ENCODE measurements at regions of chr3 and their contacts with region 1.

Region 1: GRCh38 chr3:182399978-182400737 is 393.1 kb upstream of the ATP11B start:
- DNase-seq: no peak
- H3K4me3 ChIP-seq: no peak overlapping the region
- H3K27ac ChIP-seq: no peak overlapping the region
- H3K4me1 ChIP-seq: no peaks in the 10 kb centered on the region
- H3K27me3 ChIP-seq: no peaks in the 10 kb centered on the region
- CTCF ChIP-seq: no peak
- POLR2A ChIP-seq: no peak

Region 2: DNA sequence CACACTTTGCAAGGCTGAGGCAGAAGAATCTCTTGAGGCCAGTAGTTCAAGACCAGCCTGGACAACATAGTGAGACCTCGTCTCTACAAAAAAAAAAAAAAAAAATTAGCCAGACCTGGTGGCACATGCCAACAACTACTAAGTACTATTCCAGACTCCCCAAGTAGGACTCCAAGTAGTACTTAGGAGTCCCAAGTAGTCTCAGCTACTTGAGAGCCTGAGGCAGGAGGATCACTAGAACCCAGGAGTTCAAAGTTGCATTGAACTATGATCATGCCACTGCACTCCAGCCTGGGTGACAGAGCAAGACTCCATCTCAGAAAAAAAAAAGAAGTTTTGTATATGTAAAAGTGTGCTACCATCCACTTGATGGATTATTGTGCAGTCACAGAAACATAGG is 201.8 kb before region 1 on chr3:
- intact Hi-C with region 1: no loop called
- DNase-seq: no peak
- H3K4me3 ChIP-seq: no peak overlapping the region
- H3K27ac ChIP-seq: no peak overlapping the region
- H3K4me1 ChIP-seq: no peaks in the 10 kb centered on the region
- H3K27me3 ChIP-seq: no peaks in the 10 kb centered on the region
- CTCF ChIP-seq: no peak
- POLR2A ChIP-seq: no peak

Region 3: DNA sequence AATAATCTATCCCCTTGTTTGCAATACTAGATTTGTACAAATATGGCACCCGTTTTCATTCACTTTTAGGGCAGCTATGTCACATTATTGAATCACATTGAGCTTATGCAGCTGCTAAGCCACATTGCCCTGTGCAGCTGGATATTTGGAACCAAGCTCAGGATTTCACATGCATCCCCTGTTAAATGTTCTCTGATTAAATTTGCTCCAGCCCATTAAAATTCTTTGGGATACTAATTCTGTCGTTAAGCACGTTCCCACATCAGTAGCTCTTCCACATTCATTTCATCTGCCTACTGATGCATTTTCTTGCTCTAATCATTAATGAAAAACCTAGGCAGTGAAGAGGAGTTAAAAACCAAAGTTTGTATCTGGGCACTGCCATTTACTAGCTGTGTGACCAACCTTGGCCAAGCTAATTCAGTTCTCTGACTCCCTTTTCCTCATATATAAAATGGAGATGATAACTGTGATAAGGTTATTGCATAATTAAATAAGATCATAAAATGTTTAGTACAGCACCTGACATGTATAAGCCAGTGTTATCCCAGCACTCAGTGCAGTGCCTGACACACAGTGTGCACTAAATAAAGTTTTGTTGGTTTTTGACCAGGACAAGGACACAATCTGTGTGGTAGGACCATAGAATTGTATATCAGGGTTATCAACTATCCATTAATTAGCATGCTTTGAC is 170.9 kb after region 1 on chr3:
- intact Hi-C with region 1: loop called (anchors 5 kb)
- DNase-seq: no peak
- H3K4me3 ChIP-seq: no peak overlapping the region
- H3K27ac ChIP-seq: no peak overlapping the region
- H3K4me1 ChIP-seq: no peaks in the 10 kb centered on the region
- H3K27me3 ChIP-seq: no peaks in the 10 kb centered on the region
- CTCF ChIP-seq: no peak
- POLR2A ChIP-seq: no peak

Measured in breast epithelium (tissue), 4 donors.